Activated CD4-positive, alpha-beta T cell treated with anti-CD3 and anti-CD28 coated beads for 36 hours (primary cell): ENCODE measurements at regions of chr11 and their contacts with region 1.

Region 1: DNA sequence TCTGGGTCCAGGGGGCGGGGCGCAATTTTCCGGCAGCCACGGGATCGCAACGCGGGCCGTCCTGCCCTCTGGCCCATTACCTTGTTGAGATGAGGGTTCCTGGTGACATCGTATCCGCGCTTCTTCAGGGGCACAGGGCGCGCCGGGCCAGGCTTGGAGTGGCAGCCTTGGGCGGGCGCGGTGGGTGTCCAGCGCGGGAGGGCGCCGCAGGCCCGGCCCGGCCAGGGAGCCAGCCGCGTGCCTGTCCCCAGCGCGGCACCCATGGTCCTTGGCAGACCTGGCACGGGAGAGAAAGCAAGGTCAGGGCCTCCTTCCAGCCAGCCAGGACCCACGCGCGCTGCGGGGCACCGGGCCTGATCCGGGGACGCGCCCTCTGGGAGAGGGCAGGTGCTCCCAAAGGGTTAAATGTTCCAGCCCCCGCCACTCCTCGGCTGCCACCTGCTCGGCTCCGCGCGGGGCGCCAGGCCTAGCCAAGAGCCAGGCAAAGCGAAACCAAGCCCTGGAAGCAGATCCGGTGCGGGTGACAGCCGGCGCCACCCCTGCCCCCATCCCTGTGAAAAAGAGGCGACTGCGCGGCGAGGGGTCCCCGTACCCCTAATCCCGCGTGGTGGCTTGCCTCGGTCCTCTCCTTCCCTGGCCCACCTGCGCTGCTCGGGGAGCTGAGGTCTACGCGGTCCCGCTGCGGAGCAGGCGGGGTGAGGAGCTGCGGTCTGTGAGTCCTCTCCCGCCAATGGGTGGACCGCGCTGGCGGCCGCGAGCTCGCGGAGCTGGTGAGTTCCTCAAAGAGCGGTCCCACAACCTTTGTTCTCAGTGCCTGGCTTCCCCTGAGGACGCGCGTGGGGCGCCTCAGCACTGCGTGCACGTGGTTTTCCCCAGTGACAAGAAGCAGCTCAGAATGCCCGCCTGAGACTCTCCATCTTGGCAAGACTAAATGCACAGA is at the start of gene ME3:
- DNase-seq: peak; percentile 72
- ATAC-seq: peak; percentile 89
- H3K4me3 Mint-ChIP-seq: peak within 1 kb of the TSS; percentile 64
- H3K27ac Mint-ChIP-seq: peak within 1 kb of the TSS; percentile 71
- H3K4me1 Mint-ChIP-seq: peaks cover 24% of the 10 kb centered on the region
- H3K27me3 Mint-ChIP-seq: peaks cover 17% of the 10 kb centered on the region
- total RNA-seq, gene ME3: 4.0 to 6.0 TPM

Region 2: GRCh38 chr11:86688398-86689179 is 16.6 kb after region 1 on chr11:
- CTCF ChIA-PET with region 1: interaction called, 20 read pairs
- POLR2A ChIA-PET with region 1: interaction called, 4 read pairs
- intact Hi-C with region 1: loop called in 1 of 2 experiments (anchors 2 kb)
- DNase-seq: peak; percentile 69
- ATAC-seq: peak; percentile 87
- H3K4me3 Mint-ChIP-seq: peak overlapping the region; percentile 16
- H3K27ac Mint-ChIP-seq: peak overlapping the region; percentile 92
- H3K4me1 Mint-ChIP-seq: peaks cover 28% of the 10 kb centered on the region
- H3K27me3 Mint-ChIP-seq: peaks cover 7% of the 10 kb centered on the region

Region 3: DNA sequence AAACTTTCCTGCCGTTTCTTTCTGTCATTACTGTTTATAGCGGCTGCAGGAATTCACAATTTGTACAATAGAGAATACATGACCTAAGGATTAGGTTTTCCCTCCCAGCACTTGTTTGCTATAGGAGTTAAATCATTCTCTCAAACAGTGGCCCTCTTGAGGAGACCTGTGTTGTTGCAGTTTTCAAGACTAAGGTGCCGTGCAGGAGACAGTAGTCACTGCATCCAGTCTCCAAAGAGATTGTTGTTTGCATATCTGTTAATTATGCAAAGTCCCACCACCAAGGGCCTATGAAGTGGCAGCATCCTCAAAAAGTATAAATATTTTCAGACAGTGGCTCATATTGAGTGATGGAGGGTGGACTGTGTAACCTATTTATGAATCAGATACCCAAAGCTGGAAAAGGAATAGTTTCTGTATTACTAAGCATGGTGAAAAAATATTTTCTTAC is 130.7 kb after region 1 on chr11:
- CTCF ChIA-PET with region 1: no interaction called
- POLR2A ChIA-PET with region 1: no interaction called
- intact Hi-C with region 1: loop called (anchors 1 to 5 kb)
- DNase-seq: peak; percentile 39
- ATAC-seq: peak; percentile 34
- H3K4me3 Mint-ChIP-seq: no peak overlapping the region
- H3K27ac Mint-ChIP-seq: no peak overlapping the region
- H3K4me1 Mint-ChIP-seq: peaks cover 62% of the 10 kb centered on the region
- H3K27me3 Mint-ChIP-seq: peaks cover 55% of the 10 kb centered on the region

Region 4: GRCh38 chr11:86818466-86819192 is 146.7 kb after region 1 on chr11:
- CTCF ChIA-PET with region 1: interaction called, 3 read pairs
- POLR2A ChIA-PET with region 1: no interaction called
- intact Hi-C with region 1: loop called in 1 of 2 experiments (anchors 5 kb)
- DNase-seq: no peak
- ATAC-seq: no peak
- H3K4me3 Mint-ChIP-seq: no peak overlapping the region
- H3K27ac Mint-ChIP-seq: no peak overlapping the region
- H3K4me1 Mint-ChIP-seq: peaks cover 6% of the 10 kb centered on the region
- H3K27me3 Mint-ChIP-seq: peaks cover 27% of the 10 kb centered on the region